ENCODE measurements at regions of chr12 and their contacts with region 1.

Region 1: DNA sequence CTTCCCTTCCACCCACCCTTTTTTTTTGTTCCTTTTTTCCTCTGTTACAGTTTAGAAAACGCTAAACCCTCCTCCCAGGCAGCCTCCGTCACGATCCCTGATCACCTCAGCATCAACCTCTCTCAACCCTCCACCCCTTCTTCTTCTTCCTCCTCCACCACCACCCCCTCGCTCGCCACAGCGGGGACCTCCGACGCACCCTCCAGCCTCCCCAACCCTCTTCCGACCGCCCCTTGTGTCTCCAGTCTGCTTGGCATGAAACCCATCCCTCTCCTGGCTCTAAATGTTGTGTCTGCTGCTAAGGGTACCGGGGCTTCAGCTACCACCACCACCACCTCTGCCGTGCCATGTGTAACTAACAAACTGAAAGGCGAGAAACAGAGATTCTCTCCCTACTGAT is 22.9 kb downstream of the PCBP2 start:
- DNase-seq: no peak
- ATAC-seq: no peak
- H3K4me3 ChIP-seq: no peak overlapping the region
- H3K27ac ChIP-seq: no peak overlapping the region
- H3K4me1 ChIP-seq: no peaks in the 10 kb centered on the region
- H3K27me3 ChIP-seq: no peaks in the 10 kb centered on the region

Region 2: GRCh38 chr12:53514628-53515290 is 39.9 kb after region 1 on chr12:
- intact Hi-C with region 1: loop called in 1 of 2 experiments (anchors 5 kb)
- DNase-seq: no peak
- ATAC-seq: no peak
- H3K4me3 ChIP-seq: no peak overlapping the region
- H3K27ac ChIP-seq: no peak overlapping the region
- H3K4me1 ChIP-seq: no peaks in the 10 kb centered on the region
- H3K27me3 ChIP-seq: no peaks in the 10 kb centered on the region

Measured in aorta (tissue), 5 donors.